Activated CD4-positive, alpha-beta T cell treated with anti-CD3 and anti-CD28 coated beads for 36 hours (primary cell): ENCODE measurements at regions of chr10 and their contacts with region 1.

Region 1: DNA sequence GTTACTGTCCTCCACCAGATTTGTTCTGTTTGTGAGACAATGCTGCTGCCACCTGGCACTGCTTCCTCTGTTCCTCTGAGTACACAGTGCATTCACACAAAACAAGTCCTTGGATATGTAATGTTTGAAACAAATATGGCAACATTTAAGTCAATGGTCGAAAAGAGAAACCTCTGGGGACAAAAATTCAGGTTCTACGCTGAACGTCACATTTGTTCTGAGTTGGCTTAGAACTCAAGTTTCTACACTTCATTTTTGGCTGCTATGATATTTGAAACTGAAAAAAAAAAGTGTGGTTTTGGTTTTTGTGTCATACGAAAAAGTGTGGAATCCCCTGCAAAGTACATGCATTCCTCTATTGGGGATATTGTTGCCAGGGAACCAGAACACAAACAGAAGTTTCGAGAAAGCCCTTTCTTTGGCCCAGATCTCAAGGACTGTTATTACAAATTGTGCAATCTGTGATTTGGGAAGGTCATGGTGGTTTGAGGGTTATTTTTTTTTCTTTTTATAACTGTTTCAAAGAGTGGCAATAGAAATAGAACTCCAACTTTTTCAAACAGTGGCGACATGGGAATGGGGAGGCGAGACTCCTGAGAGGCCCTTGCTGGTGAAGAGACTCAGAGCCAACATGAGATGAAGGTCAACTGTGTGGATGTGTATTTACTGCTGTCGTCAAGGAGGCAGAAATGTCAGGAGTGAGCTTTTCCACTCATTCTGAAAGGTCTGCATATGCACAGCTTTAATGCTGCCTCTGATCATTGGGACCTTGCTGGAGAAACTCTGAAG is 127.5 kb downstream of the CUBN start:
- DNase-seq: peak; percentile 34
- ATAC-seq: peak; percentile 62
- H3K4me3 Mint-ChIP-seq: peak overlapping the region; percentile 24
- H3K27ac Mint-ChIP-seq: peak overlapping the region; percentile 91
- H3K4me1 Mint-ChIP-seq: peaks cover 64% of the 10 kb centered on the region
- H3K27me3 Mint-ChIP-seq: peaks cover 12% of the 10 kb centered on the region

Region 2: DNA sequence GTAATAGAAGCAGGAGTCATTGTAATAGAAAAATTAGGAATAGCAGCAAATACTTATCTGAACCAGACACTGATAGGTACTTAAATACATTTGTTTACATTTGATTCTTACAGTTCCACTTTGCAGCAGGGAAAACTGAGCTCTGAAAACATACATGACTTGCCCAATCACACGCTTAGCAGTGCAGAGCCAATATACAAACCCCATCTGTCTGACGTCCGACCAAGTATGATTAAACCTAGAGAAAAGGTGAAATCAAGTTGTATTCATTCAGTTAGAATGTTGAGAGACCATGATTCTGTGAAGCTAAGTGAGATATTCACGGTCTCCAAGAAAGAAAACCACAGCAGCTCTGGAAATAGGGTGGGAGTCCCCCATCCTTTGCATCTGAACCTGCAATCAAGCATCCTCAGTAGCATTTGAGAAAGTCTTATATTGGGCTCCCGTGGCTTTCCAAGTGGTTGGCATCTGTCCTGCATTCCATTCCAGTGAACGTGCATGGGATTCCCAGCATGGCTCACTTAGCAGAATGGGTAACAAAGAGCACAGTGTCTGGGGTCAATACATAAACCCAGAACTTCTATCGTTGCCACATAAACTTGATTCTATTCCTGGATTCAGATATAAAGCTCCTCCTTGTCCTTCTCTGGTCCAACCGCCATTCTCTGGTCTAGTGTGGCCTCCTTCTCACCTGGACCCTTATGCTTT is 36.3 kb before region 1 on chr10:
- CTCF ChIA-PET with region 1: no interaction called
- POLR2A ChIA-PET with region 1: no interaction called
- intact Hi-C with region 1: loop called in 1 of 2 experiments (anchors 2 kb)
- DNase-seq: no peak
- ATAC-seq: no peak
- H3K4me3 Mint-ChIP-seq: no peak overlapping the region
- H3K27ac Mint-ChIP-seq: no peak overlapping the region
- H3K4me1 Mint-ChIP-seq: peaks cover 24% of the 10 kb centered on the region
- H3K27me3 Mint-ChIP-seq: no peaks in the 10 kb centered on the region

Region 3: DNA sequence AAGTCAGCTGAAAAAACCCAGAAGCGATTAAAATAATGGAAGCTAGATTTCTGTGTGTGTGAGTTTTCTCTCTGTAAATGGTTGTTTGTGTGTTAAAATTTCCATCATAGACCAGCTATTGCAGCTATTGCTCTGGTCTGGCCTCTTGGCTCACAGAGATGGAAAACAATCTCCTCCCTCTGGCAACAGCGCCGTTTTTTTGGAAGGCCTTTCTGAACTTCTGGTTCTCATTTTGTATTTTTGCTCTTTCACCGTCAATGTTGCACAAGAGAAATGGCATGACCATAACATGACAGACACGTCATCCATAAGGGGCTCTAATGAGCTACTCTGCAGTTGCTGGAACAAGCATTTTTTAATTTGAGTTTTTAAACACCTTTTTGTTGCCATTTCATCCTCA is 36.5 kb after region 1 on chr10:
- CTCF ChIA-PET with region 1: no interaction called
- POLR2A ChIA-PET with region 1: no interaction called
- intact Hi-C with region 1: no loop called
- DNase-seq: no peak
- ATAC-seq: no peak
- H3K4me3 Mint-ChIP-seq: no peak overlapping the region
- H3K27ac Mint-ChIP-seq: no peak overlapping the region
- H3K4me1 Mint-ChIP-seq: peaks cover 11% of the 10 kb centered on the region
- H3K27me3 Mint-ChIP-seq: no peaks in the 10 kb centered on the region

Region 4: DNA sequence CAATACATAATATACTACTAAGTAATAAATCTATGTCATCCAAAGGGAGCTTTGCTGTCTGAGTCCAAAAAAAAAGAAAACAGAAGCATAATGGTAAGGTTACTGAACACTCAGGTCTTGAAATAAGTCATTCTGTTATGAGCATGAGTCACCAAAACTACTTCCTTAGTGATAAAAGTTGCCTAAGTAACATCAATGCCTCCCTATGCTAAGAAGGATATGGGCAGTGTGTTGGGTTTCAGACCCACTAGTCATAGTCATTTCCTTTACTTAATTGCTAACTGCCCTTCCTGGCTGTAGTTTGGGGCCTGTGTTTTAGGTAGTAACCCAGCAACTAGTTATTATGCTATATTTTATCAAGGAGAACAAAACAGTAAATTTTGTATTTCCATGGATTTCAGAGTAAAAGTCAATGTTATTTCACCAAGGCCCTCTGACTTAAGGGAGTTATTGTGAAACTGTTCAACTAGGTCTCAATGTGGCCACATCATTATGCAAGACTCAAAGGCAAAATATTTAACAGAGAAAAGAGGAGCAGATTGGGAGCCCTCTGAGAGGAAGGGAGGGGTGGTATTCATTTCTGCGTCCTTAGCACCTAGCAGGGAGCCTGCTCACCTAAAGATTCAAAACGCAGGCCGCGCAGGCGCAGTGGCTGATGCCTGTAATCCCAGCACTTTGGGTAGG is 214.2 kb after region 1 on chr10:
- CTCF ChIA-PET with region 1: interaction called, 3 read pairs
- POLR2A ChIA-PET with region 1: no interaction called
- intact Hi-C with region 1: loop called in 1 of 2 experiments (anchors 1 kb)
- DNase-seq: peak; percentile 48
- ATAC-seq: peak; percentile 96
- H3K4me3 Mint-ChIP-seq: no peak overlapping the region
- H3K27ac Mint-ChIP-seq: peak overlapping the region; percentile 85
- H3K4me1 Mint-ChIP-seq: peaks cover 39% of the 10 kb centered on the region
- H3K27me3 Mint-ChIP-seq: no peaks in the 10 kb centered on the region